ENCODE measurements at regions of chr5 and their contacts with region 1.

Region 1: DNA sequence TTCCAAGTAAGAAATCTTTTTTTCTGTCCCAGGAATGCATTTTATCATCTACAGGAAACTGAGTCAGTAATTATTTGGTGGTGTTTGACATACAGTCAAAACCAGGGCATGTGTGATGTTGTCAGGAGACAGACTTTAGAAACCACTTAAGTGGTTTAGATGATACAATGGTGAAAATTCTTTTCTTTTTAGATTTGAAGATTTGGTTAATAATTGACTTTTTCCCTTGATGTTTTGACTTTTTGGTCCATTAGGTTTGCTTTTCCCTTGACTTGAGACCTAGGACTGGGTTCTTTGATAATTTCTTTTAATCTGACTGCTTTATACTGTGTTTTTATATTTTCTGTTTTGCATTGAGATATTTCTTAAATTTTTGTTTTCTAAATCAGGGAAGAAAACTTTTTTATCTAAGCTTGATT is 85.2 kb downstream of the RASGRF2 start:
- DNase-seq: no peak
- H3K4me3 ChIP-seq: no peak overlapping the region
- H3K27ac ChIP-seq: no peak overlapping the region
- H3K4me1 ChIP-seq: no peaks in the 10 kb centered on the region
- CTCF ChIP-seq: no peak

Region 2: GRCh38 chr5:81922854-81923279 is 877.5 kb after region 1 on chr5:
- CTCF ChIA-PET with region 1: no interaction called
- POLR2A ChIA-PET with region 1: interaction called, 10 read pairs
- intact Hi-C with region 1: no loop called
- DNase-seq: no peak
- H3K4me3 ChIP-seq: no peak overlapping the region
- H3K27ac ChIP-seq: no peak overlapping the region
- H3K4me1 ChIP-seq: no peaks in the 10 kb centered on the region
- CTCF ChIP-seq: no peak